Panc1 (cell line): ENCODE measurements at regions of chr11 and their contacts with region 1.

Region 1: DNA sequence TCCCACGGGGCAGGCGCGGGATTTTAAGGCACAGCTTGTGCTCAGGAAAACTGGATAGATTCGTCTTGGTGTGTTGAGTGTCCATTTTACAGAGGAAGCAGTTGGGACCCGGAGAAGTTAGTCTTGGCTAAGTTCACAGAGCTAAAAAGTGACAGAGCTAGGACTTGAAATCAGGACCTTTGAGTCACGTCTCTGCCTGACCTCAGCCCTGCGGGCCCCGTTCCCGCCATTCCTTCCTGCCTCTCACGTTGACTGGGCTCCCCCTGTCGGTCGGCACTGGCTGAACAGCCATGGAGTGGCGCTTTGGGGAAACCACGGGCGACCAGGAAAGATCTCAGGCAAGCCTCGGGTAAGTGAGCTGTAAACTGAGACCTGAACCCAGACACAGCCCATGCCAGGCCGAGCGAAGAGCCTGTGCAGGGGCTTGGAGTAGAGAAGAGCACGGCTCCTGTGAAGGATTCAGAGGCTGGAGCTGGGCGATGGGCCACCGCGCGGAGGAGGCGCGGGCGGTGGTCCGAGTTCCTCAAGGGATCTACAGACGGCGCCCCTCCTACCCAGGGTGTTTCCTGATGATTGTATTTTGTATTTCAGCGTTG is 54.1 kb downstream of the WNT11 start:
- DNase-seq: peak; percentile 58
- ATAC-seq: peak; percentile 91
- H3K4me3 ChIP-seq: peak overlapping the region; percentile 5 to 41
- H3K27ac ChIP-seq: peak overlapping the region; percentile 40
- H3K4me1 ChIP-seq: peaks cover 7% of the 10 kb centered on the region
- H3K27me3 ChIP-seq: no peaks in the 10 kb centered on the region
- CTCF ChIP-seq: peak; percentile 99

Region 2: GRCh38 chr11:75791015-75791414 is 361.2 kb before region 1 on chr11:
- CTCF ChIA-PET with region 1: interaction called, 11 read pairs
- POLR2A ChIA-PET with region 1: no interaction called
- in situ Hi-C with region 1: no loop called
- intact Hi-C with region 1: no loop called
- DNase-seq: no peak
- ATAC-seq: peak; percentile 36
- H3K4me3 ChIP-seq: no peak overlapping the region
- H3K27ac ChIP-seq: no peak overlapping the region
- H3K4me1 ChIP-seq: 0 out of 2 replicates have a peak, but pooled peaks cover 4% of the 10 kb centered on the region
- H3K27me3 ChIP-seq: no peaks in the 10 kb centered on the region
- CTCF ChIP-seq: no peak

Region 3: DNA sequence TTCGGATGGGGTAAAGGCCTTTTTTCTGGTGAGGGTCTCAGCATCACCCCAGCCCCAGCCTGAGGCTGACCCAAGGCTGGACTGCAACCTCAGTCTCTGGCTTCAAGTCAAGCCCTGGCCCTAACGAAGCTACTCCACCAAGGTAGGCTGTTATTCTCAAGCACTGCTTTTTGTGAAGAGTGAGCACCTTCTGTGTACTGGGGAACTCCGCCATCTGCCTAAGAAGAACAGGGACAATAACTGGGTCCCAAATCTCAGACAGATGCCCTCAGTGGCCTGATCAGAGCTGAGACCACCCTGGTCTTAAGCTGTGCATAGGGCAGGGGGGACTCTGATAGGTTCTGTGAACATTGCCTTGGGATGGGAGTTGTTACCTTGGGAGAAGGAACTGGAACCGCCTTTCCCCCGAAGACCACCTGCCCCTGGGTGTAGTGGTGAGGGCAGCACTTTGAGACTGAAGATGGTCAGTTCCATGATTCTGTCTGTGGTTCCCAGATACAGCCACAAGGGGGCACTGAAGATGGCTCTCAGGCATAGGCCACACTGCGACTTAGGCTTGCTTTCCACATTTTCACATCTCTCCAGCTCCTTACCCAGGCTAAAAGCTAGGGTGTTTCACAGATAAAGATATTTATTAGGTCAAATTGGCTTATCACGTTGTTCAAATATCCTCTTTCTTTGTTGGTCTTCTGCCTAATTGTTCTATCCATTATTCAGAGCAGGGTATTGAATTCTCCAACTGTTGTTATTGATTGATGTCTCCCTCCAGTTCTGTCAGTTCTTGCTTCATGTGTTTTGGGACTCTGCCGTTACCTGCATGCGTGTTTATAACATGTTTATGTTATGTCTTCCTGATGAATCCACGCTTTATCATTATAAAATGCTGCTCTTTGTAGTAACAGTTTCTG is 349.0 kb before region 1 on chr11:
- CTCF ChIA-PET with region 1: no interaction called
- POLR2A ChIA-PET with region 1: no interaction called
- in situ Hi-C with region 1: no loop called
- intact Hi-C with region 1: loop called (anchors 10 kb)
- DNase-seq: peak; percentile 76
- ATAC-seq: peak; percentile 96
- H3K4me3 ChIP-seq: no peak overlapping the region
- H3K27ac ChIP-seq: no peak overlapping the region
- H3K4me1 ChIP-seq: no peaks in the 10 kb centered on the region
- H3K27me3 ChIP-seq: no peaks in the 10 kb centered on the region
- CTCF ChIP-seq: peak; percentile 97

Region 4: GRCh38 chr11:75896843-75897419 is 255.3 kb before region 1 on chr11:
- CTCF ChIA-PET with region 1: interaction called, 20 read pairs
- POLR2A ChIA-PET with region 1: interaction called, 4 read pairs
- in situ Hi-C with region 1: no loop called
- intact Hi-C with region 1: loop called (anchors 2 kb)
- DNase-seq: peak; percentile 30
- ATAC-seq: peak; percentile 60; the same call in 1 of the 2 replicates
- H3K4me3 ChIP-seq: no peak overlapping the region
- H3K27ac ChIP-seq: no peak overlapping the region
- H3K4me1 ChIP-seq: no peaks in the 10 kb centered on the region
- H3K27me3 ChIP-seq: no peaks in the 10 kb centered on the region
- CTCF ChIP-seq: peak; percentile 77; the same call in 1 of the 2 replicates